Vagina (tissue), 2 donors: ENCODE measurements at regions of chr11 and their contacts with region 1.

Region 1: DNA sequence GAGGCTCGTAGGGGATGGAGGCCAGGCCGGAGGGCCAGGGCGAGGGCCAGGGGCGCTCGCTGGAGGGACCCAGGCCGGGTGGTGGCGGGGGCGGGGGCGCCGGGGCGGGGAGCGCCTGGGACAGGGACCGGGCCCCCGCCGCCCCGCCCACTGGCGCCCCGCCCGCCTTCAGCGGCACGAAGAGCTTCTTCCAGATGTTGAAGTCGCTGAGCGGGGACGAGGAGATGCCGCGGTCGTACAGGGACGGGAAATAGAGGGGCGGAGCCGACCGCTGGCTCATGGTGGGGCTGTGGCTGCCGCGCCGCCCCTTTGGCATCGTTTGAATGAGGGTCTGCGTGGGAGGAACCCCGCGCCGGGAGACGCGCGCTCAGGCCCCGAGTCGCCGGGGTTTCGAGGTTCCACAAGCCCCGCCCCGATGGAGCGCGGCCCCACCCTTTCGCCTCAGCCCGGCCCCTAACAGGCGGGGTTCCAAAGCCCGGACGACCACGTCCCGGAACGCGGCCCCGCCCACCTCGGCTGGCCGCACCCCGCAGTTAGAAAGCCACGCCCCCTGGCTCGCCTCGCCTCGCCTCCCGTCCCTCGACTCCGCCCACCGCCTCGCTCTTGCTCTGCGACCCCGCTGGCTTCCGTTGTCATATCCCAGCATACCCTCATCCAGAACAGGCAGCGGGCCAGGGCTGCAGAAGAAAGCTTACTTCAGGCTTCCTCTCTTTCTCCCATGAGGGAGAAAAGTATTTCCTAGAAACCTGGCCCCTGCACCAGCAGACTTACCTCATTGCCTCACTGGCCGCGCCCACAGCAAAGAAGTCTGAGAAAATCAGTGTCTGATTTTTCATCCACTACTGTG is at the start of gene C11orf91:
- DNase-seq: peak in 1 of 2 donors; percentile 93
- H3K4me3 ChIP-seq: peak within 1 kb of the TSS; percentile 51 to 64
- H3K27ac ChIP-seq: peak within 1 kb of the TSS; percentile 75
- H3K4me1 ChIP-seq: peaks cover 31% of the 10 kb centered on the region
- H3K27me3 ChIP-seq: no peaks in the 10 kb centered on the region
- CTCF ChIP-seq: no peak
- POLR2A ChIP-seq: peak in 1 of 2 donors; percentile 32
- total RNA-seq, gene C11orf91: not detected

Region 2: GRCh38 chr11:33257897-33258630 is 442.6 kb before region 1 on chr11:
- intact Hi-C with region 1: loop called (anchors 1 kb)
- DNase-seq: peak in 1 of 2 donors; percentile 97
- H3K4me3 ChIP-seq: peak overlapping the region; percentile 76 to 98
- H3K27ac ChIP-seq: peak overlapping the region; percentile 100
- H3K4me1 ChIP-seq: peaks cover 37% of the 10 kb centered on the region
- H3K27me3 ChIP-seq: no peaks in the 10 kb centered on the region
- CTCF ChIP-seq: peak in 1 of 3 experiments; percentile 38
- POLR2A ChIP-seq: peak in 1 of 2 donors; percentile 66

Region 3: GRCh38 chr11:33475993-33476392 is 224.7 kb before region 1 on chr11:
- intact Hi-C with region 1: no loop called
- DNase-seq: no peak
- H3K4me3 ChIP-seq: no peak overlapping the region
- H3K27ac ChIP-seq: no peak overlapping the region
- H3K4me1 ChIP-seq: peaks cover 6% of the 10 kb centered on the region
- H3K27me3 ChIP-seq: no peaks in the 10 kb centered on the region
- CTCF ChIP-seq: no peak
- POLR2A ChIP-seq: no peak

Region 4: GRCh38 chr11:33736148-33736809 is 35.6 kb after region 1 on chr11 and contains the start of gene CD59:
- intact Hi-C with region 1: loop called (anchors 5 kb)
- DNase-seq: peak in 1 of 2 donors; percentile 95
- H3K4me3 ChIP-seq: peak within 1 kb of the TSS; percentile 91 to 99
- H3K27ac ChIP-seq: peak within 1 kb of the TSS; percentile 97
- H3K4me1 ChIP-seq: peaks cover 53% of the 10 kb centered on the region
- H3K27me3 ChIP-seq: no peaks in the 10 kb centered on the region
- CTCF ChIP-seq: no peak
- POLR2A ChIP-seq: peak in 1 of 2 donors; percentile 89
- total RNA-seq, gene CD59: 272 TPM

Region 5: DNA sequence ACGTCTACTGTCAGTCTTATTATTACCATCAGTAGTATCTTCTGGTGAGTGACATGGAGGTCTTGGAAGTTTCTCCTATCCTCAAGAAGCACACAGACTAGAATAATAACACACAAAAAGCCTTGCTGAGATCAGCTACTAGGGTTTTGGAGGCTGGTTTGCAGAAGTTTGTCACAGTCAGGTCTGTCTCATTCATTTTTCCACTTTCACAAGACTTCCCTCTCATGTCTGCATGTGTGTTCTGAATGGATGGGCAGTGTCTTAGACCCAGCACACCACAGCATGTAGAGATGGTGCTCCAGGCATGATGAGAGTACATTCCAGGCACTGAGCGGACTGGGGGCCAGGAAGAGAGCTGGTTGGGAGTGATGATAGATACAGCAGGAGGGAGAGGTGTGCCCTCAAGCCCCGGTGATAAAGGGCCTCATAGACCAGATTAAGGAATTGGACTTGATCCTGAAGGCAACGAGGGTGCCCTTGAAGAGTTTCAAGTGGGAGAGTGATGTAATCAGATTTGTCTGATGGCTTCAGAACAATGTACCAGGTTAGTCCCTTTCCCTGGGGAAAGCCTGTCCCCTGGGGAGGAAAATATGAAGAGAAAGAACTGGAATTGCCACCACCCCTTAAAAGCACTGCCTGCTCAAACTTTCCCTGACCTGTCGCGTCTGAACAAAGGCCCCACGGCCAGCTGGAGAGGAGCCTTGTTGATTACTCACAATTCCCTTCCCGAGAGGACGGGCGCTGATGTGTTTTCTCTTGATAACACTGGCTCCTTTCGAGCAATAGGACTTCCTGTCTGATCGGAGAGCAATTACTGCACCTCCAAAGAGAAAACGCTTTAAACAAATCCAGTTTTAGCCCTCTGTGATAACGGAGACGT is 236.3 kb after region 1 on chr11:
- intact Hi-C with region 1: loop called (anchors 10 kb)
- DNase-seq: no peak
- H3K4me3 ChIP-seq: no peak overlapping the region
- H3K27ac ChIP-seq: peak overlapping the region; percentile 40
- H3K4me1 ChIP-seq: peaks cover 13% of the 10 kb centered on the region
- H3K27me3 ChIP-seq: no peaks in the 10 kb centered on the region
- CTCF ChIP-seq: no peak
- POLR2A ChIP-seq: no peak

Region 6: DNA sequence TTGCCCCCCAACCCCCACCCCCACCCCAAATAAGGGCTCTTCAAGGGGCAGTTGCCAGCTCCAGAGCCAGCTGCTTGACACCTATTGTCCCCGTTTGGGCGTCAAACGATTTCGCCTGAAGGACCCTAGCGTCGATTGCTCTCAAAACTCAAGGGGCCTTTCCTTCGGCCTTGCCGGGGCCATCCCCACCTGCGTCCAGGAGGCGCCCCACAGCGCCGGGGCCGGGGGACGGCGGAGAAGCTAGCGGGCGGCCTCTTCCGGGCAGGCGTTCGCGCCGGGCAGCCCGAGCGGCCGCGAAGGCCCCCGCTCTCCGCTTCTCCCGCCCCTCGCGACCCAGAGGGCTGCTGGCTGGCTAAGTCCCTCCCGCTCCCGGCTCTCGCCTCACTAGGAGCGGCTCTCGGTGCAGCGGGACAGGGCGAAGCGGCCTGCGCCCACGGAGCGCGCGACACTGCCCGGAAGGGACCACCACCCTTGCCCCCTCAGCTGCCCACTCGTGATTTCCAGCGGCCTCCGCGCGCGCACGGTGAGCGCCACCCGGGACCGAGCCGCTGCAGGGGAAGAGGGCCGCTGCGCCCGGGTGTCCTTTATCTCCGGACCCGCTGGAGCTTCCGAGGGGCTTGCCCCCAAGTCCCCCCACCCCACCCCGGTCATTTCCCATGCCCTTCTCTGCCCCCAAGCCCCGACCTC is 350.8 kb after region 1 on chr11 and contains the start of gene CAPRIN1:
- intact Hi-C with region 1: no loop called
- DNase-seq: peak in 1 of 2 donors; percentile 87
- H3K4me3 ChIP-seq: peak within 1 kb of the TSS; percentile 77 to 96
- H3K27ac ChIP-seq: peak within 1 kb of the TSS; percentile 95
- H3K4me1 ChIP-seq: peaks cover 41% of the 10 kb centered on the region
- H3K27me3 ChIP-seq: no peaks in the 10 kb centered on the region
- CTCF ChIP-seq: no peak
- POLR2A ChIP-seq: peak in 1 of 2 donors; percentile 71
- total RNA-seq, gene CAPRIN1: 123 TPM